ENCODE measurements at regions of chr11 and their contacts with region 1.

Region 1: GRCh38 chr11:67682675-67683074 is 8.3 kb upstream of the ALDH3B2 start:
- DNase-seq: peak; percentile 31
- ATAC-seq: peak; percentile 57
- H3K4me3 ChIP-seq: no peak overlapping the region
- H3K27ac ChIP-seq: peak overlapping the region; percentile 67
- H3K4me1 ChIP-seq: peaks cover 24% of the 10 kb centered on the region
- H3K27me3 ChIP-seq: no peaks in the 10 kb centered on the region
- CTCF ChIP-seq: no peak

Region 2: DNA sequence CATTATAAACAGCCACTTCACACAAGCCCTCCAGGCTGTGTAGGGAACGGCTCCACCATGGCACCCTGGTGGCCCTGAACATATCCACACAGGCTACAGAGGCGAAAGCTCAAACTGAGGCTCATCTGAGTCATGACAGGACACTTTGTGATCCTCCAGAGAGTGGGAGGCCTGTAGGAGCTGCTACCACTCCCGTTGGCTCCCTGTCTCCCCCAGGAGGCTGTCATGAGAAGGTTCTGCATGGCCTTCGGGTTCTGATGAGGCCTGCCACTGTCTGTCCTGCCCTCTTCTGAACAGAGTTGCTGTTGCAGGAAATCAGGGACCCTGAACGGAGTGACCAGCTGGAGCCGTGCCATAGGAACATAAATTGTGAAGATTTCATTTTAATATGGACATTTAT is 15.6 kb after region 1 on chr11:
- CTCF ChIA-PET with region 1: no interaction called
- POLR2A ChIA-PET with region 1: interaction called, 12 read pairs
- intact Hi-C with region 1: no loop called
- DNase-seq: no peak
- ATAC-seq: no peak
- H3K4me3 ChIP-seq: no peak overlapping the region
- H3K27ac ChIP-seq: no peak overlapping the region
- H3K4me1 ChIP-seq: peaks cover 30% of the 10 kb centered on the region
- H3K27me3 ChIP-seq: no peaks in the 10 kb centered on the region
- CTCF ChIP-seq: peak; percentile 36